HCT116 (cell line): ENCODE measurements at regions of chr17 and their contacts with region 1.

Region 1: DNA sequence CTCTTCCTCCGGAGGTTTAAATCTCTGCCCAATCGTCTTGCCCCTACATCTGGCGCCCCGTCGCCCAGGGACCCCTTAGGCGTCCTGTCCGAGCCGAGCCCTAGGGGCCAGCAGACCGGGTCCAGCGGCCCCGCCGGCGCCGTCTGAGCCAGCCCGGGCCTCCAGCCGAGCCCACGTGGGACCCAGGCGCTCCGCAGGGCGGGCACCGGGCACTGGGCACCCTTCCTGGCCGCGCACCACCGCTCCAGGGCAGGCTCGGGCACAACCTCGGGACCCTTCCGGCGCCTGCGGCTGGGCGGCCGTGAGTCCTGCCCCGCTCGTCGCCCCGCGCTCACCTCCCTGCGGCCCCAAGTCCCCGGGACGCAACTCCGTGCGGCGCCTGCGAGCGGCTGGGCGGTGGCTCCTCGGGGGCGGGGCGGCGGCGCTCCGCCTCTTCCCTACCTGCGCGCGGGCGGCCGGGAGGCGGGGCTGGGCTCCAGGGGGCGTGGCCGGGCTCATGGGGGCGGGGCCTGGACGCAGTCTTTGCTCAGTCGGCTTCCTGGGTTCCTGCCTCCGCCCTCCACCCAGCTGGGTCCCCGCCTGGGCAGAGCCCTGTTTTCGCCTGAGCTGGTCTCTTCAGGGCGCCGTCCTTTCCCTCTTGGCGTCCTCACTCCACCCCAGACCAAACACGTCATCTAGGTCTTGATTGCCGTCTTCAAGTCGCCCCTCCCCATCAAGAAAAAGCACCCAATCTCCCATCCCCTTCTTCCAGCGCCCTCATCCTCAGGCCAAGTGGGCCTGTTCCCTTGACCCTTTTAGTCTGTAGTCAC is at the start of gene RHBDF2:
- DNase-seq: peak; percentile 54
- ATAC-seq: peak; percentile 87
- H3K4me3 ChIP-seq: peak within 1 kb of the TSS; percentile 92 to 100
- H3K27ac ChIP-seq: peak within 1 kb of the TSS; percentile 96
- H3K4me1 ChIP-seq: peaks cover 32 to 43% of the 10 kb centered on the region in 2 experiments
- H3K27me3 ChIP-seq: no peaks in the 10 kb centered on the region
- CTCF ChIP-seq: no peak
- POLR2A ChIP-seq: peak; percentile 85
- RAD21 ChIP-seq: no peak
- total RNA-seq, gene RHBDF2: 61.1 TPM

Region 2: GRCh38 chr17:76304226-76305134 is 196.7 kb before region 1 on chr17:
- CTCF ChIA-PET with region 1: no interaction called
- POLR2A ChIA-PET with region 1: no interaction called
- RAD21 ChIA-PET with region 1: no interaction called
- intact Hi-C with region 1: loop called (anchors 5 kb)
- DNase-seq: no peak
- ATAC-seq: no peak
- H3K4me3 ChIP-seq: no peak overlapping the region
- H3K27ac ChIP-seq: no peak overlapping the region
- H3K4me1 ChIP-seq: no peaks in the 10 kb centered on the region
- H3K27me3 ChIP-seq: no peaks in the 10 kb centered on the region
- CTCF ChIP-seq: no peak
- POLR2A ChIP-seq: no peak
- RAD21 ChIP-seq: no peak

Region 3: GRCh38 chr17:76467366-76467765 is 33.9 kb before region 1 on chr17 and contains the start of gene AANAT:
- CTCF ChIA-PET with region 1: interaction called, 100 read pairs
- POLR2A ChIA-PET with region 1: interaction called, 3 read pairs
- RAD21 ChIA-PET with region 1: interaction called, 3 to 4 read pairs
- intact Hi-C with region 1: loop called (anchors 1 kb)
- DNase-seq: no peak
- ATAC-seq: no peak
- H3K4me3 ChIP-seq: no peak within 1 kb of the TSS
- H3K27ac ChIP-seq: no peak within 1 kb of the TSS; the same call in 1 of the 2 replicates
- H3K4me1 ChIP-seq: peaks cover 0 to 10% of the 10 kb centered on the region in 2 experiments; a peak in 2 of 4 replicates
- H3K27me3 ChIP-seq: no peaks in the 10 kb centered on the region
- CTCF ChIP-seq: no peak
- POLR2A ChIP-seq: no peak
- RAD21 ChIP-seq: no peak
- total RNA-seq, gene AANAT: not detected

Region 4: DNA sequence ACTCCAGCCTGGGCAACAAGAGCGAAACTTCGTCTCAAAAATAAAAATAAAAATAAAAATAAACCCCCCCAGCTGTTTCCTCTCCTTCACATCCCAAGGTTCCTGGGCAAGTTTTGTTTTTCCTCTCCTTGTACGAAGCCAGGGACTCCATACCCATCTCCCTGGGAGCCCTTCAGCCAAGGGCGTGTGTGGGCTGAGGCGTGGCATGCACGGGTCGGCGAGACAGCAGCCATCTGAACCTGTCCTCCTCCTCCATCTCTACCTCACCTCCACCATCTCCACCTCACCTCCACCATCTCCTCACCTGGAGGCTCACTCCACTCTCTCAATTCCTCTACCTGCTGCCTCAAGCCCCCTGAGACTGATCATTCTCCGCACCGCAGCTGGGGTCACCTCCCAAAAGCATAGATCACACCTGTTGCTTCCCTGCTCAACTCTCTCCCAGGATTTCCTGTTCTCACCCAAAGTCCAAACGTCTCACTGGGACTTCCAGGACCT is 16.9 kb before region 1 on chr17:
- CTCF ChIA-PET with region 1: no interaction called
- POLR2A ChIA-PET with region 1: interaction called, 3 read pairs
- RAD21 ChIA-PET with region 1: no interaction called
- intact Hi-C with region 1: loop called (anchors 1 kb)
- DNase-seq: no peak
- ATAC-seq: peak; percentile 35
- H3K4me3 ChIP-seq: no peak overlapping the region
- H3K27ac ChIP-seq: peak overlapping the region; percentile 16
- H3K4me1 ChIP-seq: peaks cover 23 to 34% of the 10 kb centered on the region in 2 experiments
- H3K27me3 ChIP-seq: no peaks in the 10 kb centered on the region
- CTCF ChIP-seq: no peak
- POLR2A ChIP-seq: no peak
- RAD21 ChIP-seq: no peak